Mammary epithelial cell (primary cell): ENCODE measurements at regions of chrX and their contacts with region 1.

Region 1: DNA sequence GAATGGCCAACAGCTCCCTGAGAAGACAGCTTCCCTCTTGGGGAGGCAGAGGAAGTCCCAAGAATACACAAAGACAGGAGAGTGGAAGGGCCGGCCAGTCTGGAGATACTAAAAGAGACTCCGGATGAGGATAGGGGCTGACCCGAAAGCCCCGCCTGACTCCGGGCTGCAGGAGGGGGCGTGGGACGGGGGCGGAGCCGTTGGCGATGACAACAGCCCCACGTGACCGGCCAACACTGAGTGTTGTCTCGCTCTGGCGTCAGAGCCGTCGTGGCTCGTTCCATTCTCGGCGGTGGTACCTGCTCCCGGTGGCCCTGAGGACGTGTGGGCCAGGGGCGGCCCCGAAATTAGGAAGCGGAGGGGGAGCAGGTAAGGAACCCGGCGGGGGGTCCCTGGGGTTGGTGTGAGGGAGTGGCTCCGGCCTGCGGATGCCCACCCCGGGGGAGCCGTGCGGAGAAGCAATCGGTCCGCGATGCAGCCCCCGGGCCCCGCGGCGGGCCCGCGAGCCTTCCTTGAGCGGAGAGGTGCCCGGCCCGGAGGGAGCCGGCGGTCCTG is at the start of gene BEX4:
- DNase-seq: peak; percentile 29
- H3K4me3 ChIP-seq: peak within 1 kb of the TSS; percentile 55 to 63 (median 56)
- H3K27ac ChIP-seq: peak within 1 kb of the TSS; percentile 11
- H3K4me1 ChIP-seq: no peaks in the 10 kb centered on the region
- H3K27me3 ChIP-seq: peaks cover 3% of the 10 kb centered on the region
- CTCF ChIP-seq: no peak
- total RNA-seq, gene BEX4: 9.8 to 14.2 TPM

Region 2: DNA sequence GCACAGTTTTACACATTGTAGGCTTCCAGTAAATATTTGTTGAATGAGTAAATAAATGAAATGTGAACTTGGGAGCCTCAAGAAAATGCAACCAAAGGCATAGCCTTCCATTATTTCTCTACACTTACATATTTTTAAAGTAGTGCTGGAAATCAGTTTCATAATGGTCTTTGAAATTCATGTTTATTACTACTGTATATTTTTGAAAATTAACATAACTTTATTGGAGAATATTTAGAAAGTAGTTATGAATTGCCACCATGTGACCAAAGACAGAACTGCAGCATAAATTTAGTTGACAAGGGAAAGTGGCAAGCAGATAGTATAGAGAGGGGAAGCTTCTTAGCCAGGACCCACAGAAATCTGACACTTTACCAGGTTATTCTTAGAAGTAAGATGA is 33.6 kb after region 1 on chrX:
- CTCF ChIA-PET with region 1: no interaction called
- dilution Hi-C with region 1: no loop called
- in situ Hi-C with region 1: no loop called
- intact Hi-C with region 1: loop called (anchors 1 kb)
- DNase-seq: peak; percentile 9
- H3K4me3 ChIP-seq: no peak overlapping the region
- H3K27ac ChIP-seq: no peak overlapping the region
- H3K4me1 ChIP-seq: peaks cover 8% of the 10 kb centered on the region
- H3K27me3 ChIP-seq: peaks cover 3% of the 10 kb centered on the region
- CTCF ChIP-seq: peak; percentile 38 to 57

Region 3: DNA sequence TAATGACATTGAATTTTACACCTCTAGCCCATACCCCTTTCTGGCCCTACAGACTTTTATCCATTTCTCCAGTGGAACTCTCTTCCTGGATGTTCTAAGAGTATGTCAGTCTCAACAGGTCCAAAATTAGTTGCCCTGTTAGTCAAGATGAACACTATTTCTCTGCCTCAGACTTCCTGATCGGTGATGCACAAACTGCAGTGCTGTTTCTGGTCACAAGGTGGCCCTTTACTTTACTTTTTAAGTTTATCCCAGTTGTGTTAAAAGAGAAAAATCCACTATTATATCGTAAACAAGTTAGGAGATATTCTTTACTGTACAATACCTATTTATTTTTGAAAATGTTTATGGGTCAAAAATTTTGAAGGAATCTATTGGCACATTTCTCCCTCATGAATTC is 128.2 kb after region 1 on chrX:
- CTCF ChIA-PET with region 1: no interaction called
- dilution Hi-C with region 1: no loop called
- in situ Hi-C with region 1: no loop called
- intact Hi-C with region 1: loop called (anchors 10 kb)
- DNase-seq: peak; percentile 28
- H3K4me3 ChIP-seq: no peak overlapping the region
- H3K27ac ChIP-seq: no peak overlapping the region
- H3K4me1 ChIP-seq: no peaks in the 10 kb centered on the region
- H3K27me3 ChIP-seq: no peaks in the 10 kb centered on the region
- CTCF ChIP-seq: peak; percentile 74 to 83

Region 4: GRCh38 chrX:103513476-103514108 is 298.6 kb after region 1 on chrX:
- CTCF ChIA-PET with region 1: no interaction called
- dilution Hi-C with region 1: no loop called
- in situ Hi-C with region 1: no loop called
- intact Hi-C with region 1: no loop called
- DNase-seq: peak; percentile 44
- H3K4me3 ChIP-seq: no peak overlapping the region
- H3K27ac ChIP-seq: no peak overlapping the region
- H3K4me1 ChIP-seq: peaks cover 4% of the 10 kb centered on the region
- H3K27me3 ChIP-seq: no peaks in the 10 kb centered on the region
- CTCF ChIP-seq: no peak